Endothelial cell of umbilical vein (primary cell): ENCODE measurements at regions of chr10 and their contacts with region 1.

Region 1: DNA sequence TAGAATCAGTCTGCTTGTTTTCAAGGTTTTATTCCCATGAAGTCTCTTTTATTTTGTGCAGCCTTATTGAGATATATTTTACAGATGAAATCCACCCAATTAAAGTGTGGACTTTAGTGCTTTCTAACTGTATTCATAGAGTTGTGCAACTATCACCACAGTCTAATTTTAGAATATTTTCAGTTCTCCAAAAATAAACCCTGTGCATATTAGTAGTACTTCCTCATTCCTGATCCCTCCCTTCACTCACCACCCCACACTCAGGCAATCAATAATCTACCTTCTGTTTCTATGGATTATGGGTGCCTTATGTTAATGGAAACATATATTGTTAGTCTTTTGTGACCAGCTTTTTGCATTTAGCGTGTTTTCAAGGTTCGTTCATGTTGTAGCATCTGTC is 185.7 kb upstream of the TMEM72 start:
- DNase-seq: no peak
- H3K4me3 ChIP-seq: no peak overlapping the region
- H3K27ac ChIP-seq: no peak overlapping the region
- H3K4me1 ChIP-seq: no peaks in the 10 kb centered on the region
- H3K27me3 ChIP-seq: no peaks in the 10 kb centered on the region
- CTCF ChIP-seq: no peak
- POLR2A ChIP-seq: no peak

Region 2: DNA sequence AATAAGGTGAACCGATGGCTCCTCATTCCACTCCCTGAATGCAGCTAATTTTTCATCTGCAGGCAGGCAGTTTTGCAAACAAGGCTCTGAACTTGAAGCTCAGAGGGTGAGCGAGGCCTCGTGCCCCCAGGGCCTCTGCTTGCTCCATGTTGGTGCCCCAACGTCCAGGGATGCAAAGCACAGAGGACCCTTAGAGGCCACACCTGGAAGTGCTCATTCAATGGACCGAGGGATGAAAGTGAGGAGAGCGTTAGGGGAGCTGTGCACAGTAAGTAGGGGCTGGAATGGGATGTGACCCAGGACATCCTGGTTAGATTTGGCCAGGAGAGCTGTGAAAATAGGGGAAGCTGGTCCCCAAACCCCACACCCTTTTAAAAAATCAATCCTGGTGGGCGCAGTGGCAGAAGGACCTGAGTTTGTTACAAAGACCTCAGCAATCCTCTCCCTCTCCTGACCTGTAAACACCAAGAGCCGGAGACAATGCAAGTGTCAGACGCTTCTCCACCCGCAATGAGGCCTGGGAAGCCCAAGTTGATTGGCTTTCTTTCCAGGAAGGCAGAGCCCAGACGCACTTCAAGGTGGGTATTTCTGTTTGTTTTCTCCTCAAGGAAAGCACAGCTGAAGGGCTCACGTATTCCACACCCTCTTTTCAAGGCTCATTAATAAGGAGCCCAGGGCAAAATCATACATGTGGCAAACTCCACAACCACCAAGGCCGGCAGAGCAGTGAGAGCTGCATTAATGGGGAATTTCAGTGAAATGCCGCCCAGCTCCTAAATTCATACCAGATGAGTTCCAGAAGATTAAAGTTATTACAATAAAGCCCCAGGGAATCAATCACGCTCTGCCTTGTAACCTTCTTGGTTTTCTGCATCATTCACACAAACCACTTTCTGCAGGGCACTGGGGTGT is 326.4 kb before region 1 on chr10:
- CTCF ChIA-PET with region 1: no interaction called
- POLR2A ChIA-PET with region 1: no interaction called
- dilution Hi-C with region 1: no loop called
- intact Hi-C with region 1: loop called (anchors 10 kb)
- DNase-seq: no peak
- H3K4me3 ChIP-seq: no peak overlapping the region
- H3K27ac ChIP-seq: no peak overlapping the region
- H3K4me1 ChIP-seq: no peaks in the 10 kb centered on the region
- H3K27me3 ChIP-seq: no peaks in the 10 kb centered on the region
- CTCF ChIP-seq: no peak
- POLR2A ChIP-seq: no peak

Region 3: DNA sequence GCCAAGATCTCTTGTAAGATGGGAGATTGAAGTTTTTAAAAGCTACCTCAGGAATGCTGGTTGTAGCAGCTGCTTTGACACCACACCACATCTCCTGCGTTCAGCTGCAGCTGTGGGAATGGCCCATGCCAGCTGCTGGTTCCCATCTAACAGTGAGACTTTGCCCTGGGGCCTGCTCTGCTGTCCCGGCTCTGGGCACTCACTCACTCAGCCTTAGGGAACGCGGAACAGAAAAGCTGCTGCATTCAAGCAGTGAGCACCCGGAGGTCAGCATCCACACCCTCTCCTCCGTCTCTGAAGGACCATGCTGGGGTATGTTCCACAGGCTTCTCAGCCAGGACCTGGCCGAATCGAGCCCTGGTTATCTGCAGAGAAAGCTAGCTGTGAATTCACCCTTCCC is 143.4 kb before region 1 on chr10:
- CTCF ChIA-PET with region 1: no interaction called
- POLR2A ChIA-PET with region 1: no interaction called
- dilution Hi-C with region 1: no loop called
- intact Hi-C with region 1: no loop called
- DNase-seq: no peak
- H3K4me3 ChIP-seq: no peak overlapping the region
- H3K27ac ChIP-seq: no peak overlapping the region
- H3K4me1 ChIP-seq: no peaks in the 10 kb centered on the region
- H3K27me3 ChIP-seq: no peaks in the 10 kb centered on the region
- CTCF ChIP-seq: no peak
- POLR2A ChIP-seq: no peak

Region 4: GRCh38 chr10:44801383-44802327 is 76.3 kb after region 1 on chr10:
- CTCF ChIA-PET with region 1: no interaction called
- POLR2A ChIA-PET with region 1: no interaction called
- dilution Hi-C with region 1: no loop called
- intact Hi-C with region 1: no loop called
- DNase-seq: peak; percentile 92
- H3K4me3 ChIP-seq: no peak overlapping the region
- H3K27ac ChIP-seq: peak overlapping the region; percentile 19
- H3K4me1 ChIP-seq: peaks cover 22% of the 10 kb centered on the region
- H3K27me3 ChIP-seq: peaks cover 0 to 2% of the 10 kb centered on the region in 2 experiments
- CTCF ChIP-seq: no peak
- POLR2A ChIP-seq: no peak